Activated B cell treated with CpG ODN at 0.5 μM for 24 hours (primary cell): ENCODE measurements at regions of chr2 and their contacts with region 1.

Region 1: DNA sequence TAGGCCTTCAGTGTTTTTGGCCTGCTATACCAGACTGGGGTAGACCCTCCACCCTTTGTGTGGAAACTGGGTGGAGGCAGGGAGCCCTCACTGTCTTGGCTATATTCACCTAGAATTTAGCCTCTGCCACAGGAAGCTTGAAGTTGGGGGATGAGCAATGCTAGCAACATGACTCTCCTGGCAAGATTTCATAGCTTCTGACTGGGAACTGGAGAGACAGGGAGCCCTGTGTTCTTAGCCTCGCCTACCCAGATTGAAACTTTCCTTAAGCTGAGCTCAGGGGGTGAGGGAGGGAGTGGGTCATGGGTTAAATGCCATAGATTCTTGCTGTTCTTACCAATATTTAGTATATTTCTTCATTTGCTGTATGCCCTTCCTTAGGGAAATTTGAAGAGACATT is 46.8 kb upstream of the FAM98A start:
- DNase-seq: no peak
- ATAC-seq: no peak
- H3K4me3 Mint-ChIP-seq: no peak overlapping the region
- H3K27ac Mint-ChIP-seq: no peak overlapping the region
- H3K4me1 Mint-ChIP-seq: peaks cover 6% of the 10 kb centered on the region
- H3K27me3 Mint-ChIP-seq: peaks cover 3% of the 10 kb centered on the region
- CTCF ChIP-seq: no peak

Region 2: DNA sequence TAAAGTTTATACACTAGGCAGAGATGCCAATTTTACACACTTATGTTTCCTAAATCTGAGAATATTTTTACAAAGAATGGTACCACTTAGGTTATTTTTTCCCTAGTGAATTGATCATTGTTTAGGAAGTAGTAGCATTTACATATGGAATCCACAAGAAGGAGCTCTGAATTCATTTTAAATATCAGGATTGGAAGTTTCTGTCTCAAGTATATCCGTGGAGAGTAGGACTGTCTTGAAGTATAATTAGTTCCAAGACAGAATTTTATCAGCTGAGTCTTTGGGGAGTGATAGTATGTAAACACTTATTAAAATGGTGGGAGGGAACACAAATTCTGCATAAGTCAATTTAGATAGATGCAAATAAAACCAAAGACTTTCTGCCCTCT is 35.5 kb after region 1 on chr2:
- CTCF ChIA-PET with region 1: no interaction called
- POLR2A ChIA-PET with region 1: no interaction called
- intact Hi-C with region 1: loop called (anchors 1 kb)
- DNase-seq: no peak
- ATAC-seq: no peak
- H3K4me3 Mint-ChIP-seq: no peak overlapping the region
- H3K27ac Mint-ChIP-seq: no peak overlapping the region
- H3K4me1 Mint-ChIP-seq: no peaks in the 10 kb centered on the region
- H3K27me3 Mint-ChIP-seq: peaks cover 6% of the 10 kb centered on the region
- CTCF ChIP-seq: no peak